ENCODE measurements at regions of chr1 and their contacts with region 1.

Region 1: DNA sequence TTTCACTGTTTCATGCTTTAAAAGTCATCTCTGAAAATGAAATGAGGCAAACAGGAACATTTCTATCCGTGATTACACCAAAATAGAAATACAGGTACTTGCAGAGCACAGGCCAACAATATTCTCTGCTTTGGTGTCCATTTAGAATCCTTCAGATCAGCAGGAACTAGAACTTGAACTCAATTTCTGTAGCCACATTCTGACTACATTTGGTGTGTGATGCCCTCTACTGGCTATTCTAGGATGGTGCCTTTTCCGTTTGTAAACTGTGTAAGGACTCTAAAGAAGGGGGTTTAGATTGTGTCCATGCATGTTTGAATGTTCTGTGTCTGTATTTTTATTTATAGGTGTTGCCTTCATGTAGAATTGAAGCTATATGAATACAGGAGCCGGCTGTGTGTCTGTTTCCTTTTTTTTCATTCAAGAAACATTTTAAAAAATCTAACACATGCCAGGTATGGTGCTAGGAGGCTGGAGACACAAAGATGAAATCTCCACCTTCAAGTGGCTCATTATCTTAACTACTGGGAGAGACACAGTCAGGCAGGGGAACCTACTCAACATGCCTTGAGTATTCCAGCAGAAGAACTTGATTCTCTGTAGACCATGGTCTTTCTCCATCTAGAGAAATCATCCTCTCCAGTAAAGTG is 7.6 kb upstream of the ZNF326 start:
- DNase-seq: peak; percentile 55 to 74 (median 61)
- H3K4me3 ChIP-seq: no peak overlapping the region
- H3K4me3 Mint-ChIP-seq: no peak overlapping the region
- H3K27ac ChIP-seq: no peak overlapping the region
- H3K27ac Mint-ChIP-seq: no peak overlapping the region
- H3K4me1 ChIP-seq: no peaks in the 10 kb centered on the region
- H3K4me1 Mint-ChIP-seq: no peaks in the 10 kb centered on the region
- H3K27me3 ChIP-seq: no peaks in the 10 kb centered on the region
- H3K27me3 Mint-ChIP-seq: peaks cover 0 to 4% (median 1%) of the 10 kb centered on the region in 3 donors
- CTCF ChIP-seq: peak; percentile 93

Region 2: DNA sequence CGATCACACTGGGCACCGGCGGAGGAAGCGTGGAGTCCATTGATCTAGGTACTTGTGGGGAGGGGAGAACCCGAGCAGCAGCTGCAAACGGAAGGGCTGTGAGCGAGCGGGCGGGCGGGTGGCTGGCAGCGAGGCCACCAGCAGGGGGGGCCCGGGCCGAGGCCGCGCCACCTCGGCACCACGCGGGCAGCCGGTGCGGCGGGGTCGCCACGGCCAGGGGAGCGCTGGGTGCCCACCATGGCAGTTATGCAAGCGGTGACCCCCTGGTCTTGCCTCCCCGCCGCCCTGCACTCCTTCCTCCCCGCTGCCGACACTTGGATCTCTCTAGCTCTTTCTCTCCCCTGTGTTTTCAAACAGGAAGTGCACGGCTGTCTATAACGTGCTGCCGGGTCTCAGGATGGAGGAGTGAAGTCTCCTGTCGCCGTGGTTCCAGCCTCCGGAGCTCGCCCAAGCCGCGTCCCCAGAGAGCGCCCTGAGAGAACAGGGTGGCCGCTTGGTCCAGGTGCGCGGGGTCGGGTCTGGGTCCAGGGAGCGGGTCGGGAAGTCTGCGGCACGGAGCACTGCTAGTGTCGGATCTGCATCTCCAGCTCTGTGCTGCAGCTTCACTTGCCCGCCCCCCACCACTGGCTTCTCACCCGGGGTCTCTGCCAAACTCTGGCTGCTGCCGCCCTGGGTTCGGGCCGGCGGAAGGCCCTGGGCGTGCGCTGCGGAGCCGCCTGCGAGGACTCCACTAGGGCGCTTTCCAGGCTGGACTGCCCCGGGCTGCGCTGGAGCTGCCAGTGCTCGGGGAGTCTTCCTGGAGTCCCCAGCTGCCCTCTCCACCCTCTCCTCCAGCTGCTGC is 143.8 kb before region 1 on chr1:
- intact Hi-C with region 1: loop called in 1 of 2 experiments (anchors 10 kb)
- DNase-seq: peak; percentile 42 to 63 (median 51)
- H3K4me3 ChIP-seq: peak overlapping the region; percentile 70 to 90 (median 74)
- H3K4me3 Mint-ChIP-seq: peak overlapping the region; percentile 85 to 90
- H3K27ac ChIP-seq: peak overlapping the region in 1 of 2 donors; percentile 79
- H3K27ac Mint-ChIP-seq: peak overlapping the region; percentile 55 to 89 (median 84)
- H3K4me1 ChIP-seq: peaks cover 26 to 29% of the 10 kb centered on the region in 2 donors
- H3K4me1 Mint-ChIP-seq: peaks cover 57% of the 10 kb centered on the region
- H3K27me3 ChIP-seq: no peaks in the 10 kb centered on the region
- H3K27me3 Mint-ChIP-seq: no peaks in the 10 kb centered on the region
- CTCF ChIP-seq: peak; percentile 96

Region 3: DNA sequence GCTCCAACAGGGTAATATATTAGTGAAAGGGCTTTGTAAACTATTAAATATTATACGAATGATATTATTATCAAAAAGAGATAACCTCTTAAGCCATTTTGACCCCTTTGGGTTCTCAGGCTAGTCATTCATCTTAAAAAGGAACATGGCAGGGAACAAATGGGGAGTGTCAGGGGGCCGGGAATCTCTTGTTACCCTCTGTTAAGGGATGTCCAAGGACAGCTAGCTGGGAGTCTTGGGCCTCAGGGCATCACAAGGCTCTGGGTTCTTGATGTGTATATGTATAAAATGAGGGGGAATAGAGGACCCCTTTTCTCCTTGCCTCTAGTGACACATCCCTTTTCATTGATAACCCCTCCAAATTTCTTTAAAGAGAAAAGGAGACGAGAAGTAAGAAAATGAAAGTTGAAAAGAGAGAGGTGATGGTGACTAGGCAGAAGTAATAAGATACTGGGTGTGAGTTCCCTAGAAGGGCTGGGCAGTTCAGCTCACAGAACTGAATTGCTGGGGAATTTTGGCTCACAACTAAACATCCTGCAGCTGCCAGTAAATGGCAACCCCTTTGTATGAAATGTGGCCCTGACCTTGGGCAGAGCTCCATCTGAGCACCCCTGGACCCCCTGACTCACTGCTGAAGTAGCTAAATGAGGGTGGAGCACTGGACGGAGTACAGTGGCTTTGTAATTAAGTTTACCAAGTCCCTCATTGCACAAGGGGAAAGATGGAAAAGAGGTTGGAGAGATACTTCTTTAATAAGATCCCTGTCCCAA is 12.4 kb before region 1 on chr1:
- intact Hi-C with region 1: no loop called
- DNase-seq: peak in 2 of 3 donors; percentile 7 to 29
- H3K4me3 ChIP-seq: peak overlapping the region in 1 of 3 experiments; percentile 63
- H3K4me3 Mint-ChIP-seq: peak overlapping the region in 1 of 2 donors; percentile 88
- H3K27ac ChIP-seq: peak overlapping the region; percentile 32 to 63
- H3K27ac Mint-ChIP-seq: peak overlapping the region; percentile 64 to 88 (median 78)
- H3K4me1 ChIP-seq: peaks cover 25 to 26% of the 10 kb centered on the region in 2 donors
- H3K4me1 Mint-ChIP-seq: peaks cover 29% of the 10 kb centered on the region
- H3K27me3 ChIP-seq: no peaks in the 10 kb centered on the region
- H3K27me3 Mint-ChIP-seq: peaks cover 0 to 4% (median 2%) of the 10 kb centered on the region in 3 donors
- CTCF ChIP-seq: no peak